Adrenal gland (tissue), 19 donors: ENCODE measurements at regions of chrX and their contacts with region 1.

Region 1: DNA sequence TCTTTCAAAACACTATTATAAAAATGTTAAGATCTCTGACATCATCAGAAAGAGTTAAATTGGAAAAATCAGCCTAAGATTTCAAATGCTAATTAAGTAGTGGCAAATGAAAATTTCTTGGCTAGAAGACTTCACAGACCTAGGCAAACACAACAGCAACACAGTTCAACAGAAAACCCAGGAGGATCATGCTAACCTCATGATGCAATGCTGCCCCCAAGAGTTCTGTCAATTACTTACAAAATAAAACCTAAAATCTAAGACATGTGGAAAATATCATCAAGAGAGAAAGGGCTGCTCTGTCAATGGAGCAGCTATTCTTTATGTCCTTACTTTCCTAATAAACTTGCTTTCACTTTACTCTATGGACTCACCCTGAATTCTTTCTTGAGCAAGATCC is 21.0 kb downstream of the S100G start:
- DNase-seq: peak in 3 of 7 donors; percentile 17 to 36 (median 36)
- H3K4me3 ChIP-seq: no peak overlapping the region
- H3K27ac ChIP-seq: no peak overlapping the region
- H3K4me1 ChIP-seq: no peaks in the 10 kb centered on the region
- H3K27me3 ChIP-seq: peaks cover 6% of the 10 kb centered on the region
- CTCF ChIP-seq: peak in 4 of 6 experiments; percentile 32 to 44 (median 40)
- POLR2A ChIP-seq: no peak

Region 2: GRCh38 chrX:16436348-16437188 is 234.4 kb before region 1 on chrX:
- intact Hi-C with region 1: loop called (anchors 10 kb)
- DNase-seq: peak; percentile 65 to 90 (median 82)
- H3K4me3 ChIP-seq: no peak overlapping the region
- H3K27ac ChIP-seq: no peak overlapping the region
- H3K4me1 ChIP-seq: no peaks in the 10 kb centered on the region
- H3K27me3 ChIP-seq: no peaks in the 10 kb centered on the region
- CTCF ChIP-seq: peak; percentile 34 to 73 (median 46)
- POLR2A ChIP-seq: no peak

Region 3: GRCh38 chrX:16445166-16445752 is 225.7 kb before region 1 on chrX:
- intact Hi-C with region 1: loop called in 1 of 2 experiments (anchors 10 kb)
- DNase-seq: peak in 6 of 7 donors; percentile 18 to 54 (median 30)
- H3K4me3 ChIP-seq: no peak overlapping the region
- H3K27ac ChIP-seq: no peak overlapping the region
- H3K4me1 ChIP-seq: no peaks in the 10 kb centered on the region
- H3K27me3 ChIP-seq: peaks cover 5% of the 10 kb centered on the region
- CTCF ChIP-seq: peak; percentile 29 to 63 (median 50)
- POLR2A ChIP-seq: no peak